AG04449 (cell line): ENCODE measurements at regions of chr21 and their contacts with region 1.

Region 1: DNA sequence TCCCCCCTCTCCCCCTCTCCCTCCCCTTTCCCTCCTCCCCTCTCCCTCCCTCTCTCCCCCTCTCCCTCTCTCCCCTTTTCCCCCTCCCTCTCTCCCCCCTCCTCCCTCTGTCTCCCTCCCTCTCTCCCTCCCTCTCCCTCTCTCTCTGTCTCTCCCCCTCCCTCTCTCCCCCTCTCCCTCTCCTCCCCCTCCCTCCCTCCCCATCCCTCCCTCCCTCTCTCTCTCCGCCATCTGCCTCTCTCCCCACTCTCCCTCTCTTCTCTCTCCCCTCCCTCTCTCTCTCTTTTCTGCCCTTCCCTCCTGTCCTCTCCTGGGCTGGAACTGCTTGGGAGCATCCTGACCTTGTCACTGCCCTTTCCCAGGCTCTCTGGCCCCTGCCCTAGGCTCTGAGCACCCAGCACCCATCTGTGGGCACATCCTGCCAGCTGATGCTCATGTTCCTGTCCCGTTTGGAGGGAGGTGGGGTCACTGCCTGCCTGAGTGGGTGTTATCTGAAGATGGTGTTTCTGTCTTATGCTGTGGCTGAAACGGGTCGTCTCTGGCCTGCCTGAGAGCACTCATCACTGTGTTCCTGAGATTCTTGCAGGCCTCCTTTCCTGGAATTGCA is 10.8 kb downstream of the FTCD start:
- DNase-seq: no peak
- H3K4me3 ChIP-seq: no peak overlapping the region
- CTCF ChIP-seq: no peak

Region 2: GRCh38 chr21:45880097-45881068 is 264.2 kb before region 1 on chr21:
- CTCF ChIA-PET with region 1: no interaction called
- POLR2A ChIA-PET with region 1: no interaction called
- DNase-seq: no peak
- H3K4me3 ChIP-seq: no peak overlapping the region
- CTCF ChIP-seq: peak; percentile 68

Region 3: DNA sequence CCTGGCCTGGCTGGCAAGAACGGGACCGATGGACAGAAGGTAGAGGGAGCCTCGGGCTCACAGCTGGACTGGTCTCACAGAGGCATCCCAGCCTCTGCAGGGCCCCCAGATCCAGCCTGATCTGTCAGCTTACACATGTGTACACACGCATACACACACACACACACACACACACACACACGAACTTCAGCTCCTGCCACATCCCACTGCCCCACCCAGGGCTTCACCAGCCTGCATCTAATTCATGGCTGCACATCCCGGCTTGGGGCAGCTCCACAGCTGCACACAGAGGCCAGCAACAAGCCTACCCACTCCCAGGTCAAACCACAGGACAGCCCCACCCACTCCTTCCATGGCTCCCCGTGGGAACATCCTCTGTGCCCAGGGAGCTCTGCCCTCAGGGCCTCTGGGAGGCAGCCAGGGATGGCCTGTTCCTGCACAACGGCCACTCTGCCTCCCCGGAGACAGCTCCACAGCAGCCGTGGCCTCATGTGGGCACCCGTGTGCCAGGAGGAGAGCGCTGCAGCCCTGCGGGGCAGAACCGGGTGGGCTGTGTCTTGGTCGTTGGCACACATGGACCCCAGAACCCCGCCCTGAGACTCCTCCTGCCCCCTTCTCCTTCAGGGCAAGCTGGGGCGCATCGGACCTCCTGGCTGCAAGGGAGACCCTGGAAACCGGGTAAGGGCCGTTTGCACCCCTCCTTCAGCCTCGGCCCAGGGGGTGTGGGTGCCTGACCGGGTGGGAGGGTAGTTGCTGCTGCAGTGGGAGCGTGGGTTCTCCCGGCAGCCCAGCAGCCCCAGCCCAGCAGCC is 27.6 kb before region 1 on chr21:
- CTCF ChIA-PET with region 1: interaction called, 12 read pairs
- POLR2A ChIA-PET with region 1: no interaction called
- DNase-seq: no peak
- H3K4me3 ChIP-seq: no peak overlapping the region
- CTCF ChIP-seq: no peak

Region 4: DNA sequence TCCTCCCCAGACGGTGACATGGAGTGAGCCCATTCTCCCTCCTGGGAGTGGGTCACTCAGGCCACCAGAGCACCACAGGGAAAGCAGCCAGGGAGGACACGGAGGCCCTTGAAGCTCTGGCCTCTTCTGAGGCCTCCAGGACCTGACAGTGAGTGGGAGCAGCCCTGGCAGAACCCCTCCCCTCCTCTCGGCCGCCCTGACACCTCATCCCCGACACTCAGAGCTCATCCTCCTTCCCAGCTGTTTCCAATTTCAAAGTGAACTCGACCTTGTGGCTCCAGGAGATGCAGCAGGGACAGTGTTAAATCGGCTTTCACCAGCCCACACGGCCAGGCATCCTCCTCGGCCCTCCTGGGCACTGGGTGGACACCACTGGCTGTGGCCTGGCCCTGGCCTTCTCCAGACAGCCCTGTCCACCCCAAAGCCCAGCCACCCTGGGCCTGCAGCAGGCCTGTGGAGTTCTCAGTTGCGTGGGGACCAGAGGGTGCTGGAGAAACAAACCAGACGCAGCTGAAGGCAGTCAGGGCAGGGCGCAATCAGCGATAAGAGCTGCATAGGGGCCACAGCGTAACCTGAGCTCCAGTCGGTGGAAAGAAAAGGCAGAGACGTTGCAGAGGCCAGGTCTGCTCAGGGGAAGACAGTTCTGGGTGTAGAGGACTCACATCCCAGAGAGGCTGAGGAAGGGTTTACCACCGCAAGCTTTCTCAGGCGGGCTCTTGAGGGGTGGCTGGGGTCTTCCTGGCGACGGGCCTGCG is 16.3 kb before region 1 on chr21:
- CTCF ChIA-PET with region 1: interaction called, 14 read pairs
- POLR2A ChIA-PET with region 1: no interaction called
- DNase-seq: no peak
- H3K4me3 ChIP-seq: no peak overlapping the region
- CTCF ChIP-seq: no peak

Region 5: DNA sequence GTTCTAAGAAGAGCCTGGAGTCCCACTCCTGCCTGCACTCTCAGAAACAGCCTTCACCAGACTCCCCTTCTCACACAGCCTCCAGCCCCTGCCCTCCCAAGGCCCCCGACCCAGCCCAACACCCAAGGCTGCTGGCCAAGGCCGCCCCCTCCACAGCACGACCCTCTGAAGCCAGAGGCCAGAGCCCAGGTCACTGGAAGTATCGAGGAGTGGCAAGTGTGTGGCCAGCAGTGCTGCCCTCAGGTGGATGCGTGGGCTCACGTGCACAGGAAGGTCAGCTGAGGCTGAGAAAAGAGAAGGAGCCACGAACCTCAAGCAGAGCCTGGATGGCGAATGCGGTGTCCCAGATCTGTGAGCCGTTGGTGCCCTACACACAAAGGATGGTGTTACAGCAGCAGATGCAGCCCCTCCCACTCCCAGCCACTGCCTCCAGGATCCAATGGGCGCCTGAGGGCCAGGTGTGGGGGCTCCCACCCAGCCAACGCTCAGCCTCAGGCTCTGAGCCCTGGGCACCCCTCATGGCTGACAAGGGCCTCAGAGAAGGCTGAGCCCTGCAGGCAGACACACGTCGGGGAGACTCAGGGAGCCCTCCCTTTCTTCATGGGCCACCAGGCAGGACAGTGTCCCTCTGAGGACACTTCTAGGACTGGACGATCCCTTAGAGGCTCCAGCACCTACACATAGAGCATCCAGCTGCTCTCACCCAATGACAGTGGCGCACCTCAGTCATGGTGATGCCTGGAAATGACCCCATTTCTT is 66.0 kb after region 1 on chr21:
- CTCF ChIA-PET with region 1: no interaction called
- POLR2A ChIA-PET with region 1: no interaction called
- DNase-seq: no peak
- H3K4me3 ChIP-seq: no peak overlapping the region
- CTCF ChIP-seq: no peak

Region 6: GRCh38 chr21:46228345-46229051 is 83.9 kb after region 1 on chr21 and contains the start of gene LSS:
- CTCF ChIA-PET with region 1: interaction called, 28 read pairs
- POLR2A ChIA-PET with region 1: no interaction called
- DNase-seq: peak; percentile 69
- H3K4me3 ChIP-seq: peak within 1 kb of the TSS; percentile 89
- CTCF ChIP-seq: no peak

Region 7: DNA sequence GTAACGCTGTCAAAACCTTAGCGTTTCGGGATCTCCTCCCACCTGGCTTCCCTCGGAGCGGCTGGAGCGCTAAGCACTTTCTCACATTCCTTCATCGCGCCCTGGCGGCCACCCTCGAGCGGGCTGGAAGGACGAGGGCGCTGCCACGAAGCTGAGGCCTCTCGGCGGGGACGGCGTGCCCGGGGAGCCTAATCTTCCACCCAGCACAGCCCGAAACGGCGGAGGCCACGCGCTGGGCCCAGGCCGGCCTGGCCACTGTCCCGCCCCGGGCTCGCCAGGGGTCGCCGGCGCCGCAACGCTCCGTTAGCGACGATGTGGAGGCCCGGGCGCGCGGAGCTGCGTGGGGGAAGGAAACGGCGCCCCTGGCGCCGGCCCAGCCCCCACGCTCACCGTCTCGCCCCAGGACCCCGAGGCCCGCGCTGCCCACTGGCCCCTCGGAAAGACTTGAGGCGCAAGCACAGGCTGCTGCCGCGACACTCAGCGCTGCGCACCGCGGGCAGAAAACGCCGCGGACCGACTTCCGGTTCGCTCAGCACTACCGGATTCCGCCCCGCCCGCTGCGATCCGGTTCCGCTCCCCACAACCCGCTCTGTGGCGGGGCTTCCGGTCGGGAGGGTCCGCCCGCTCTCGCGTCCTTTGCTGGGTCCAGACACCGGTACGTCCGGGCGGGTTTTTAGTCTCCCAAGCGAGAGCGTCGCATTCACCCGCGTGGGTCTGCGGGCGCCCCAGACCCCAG is 141.4 kb after region 1 on chr21 and contains the start of gene YBEY:
- CTCF ChIA-PET with region 1: interaction called, 19 read pairs
- POLR2A ChIA-PET with region 1: no interaction called
- DNase-seq: no peak
- H3K4me3 ChIP-seq: peak within 1 kb of the TSS; percentile 77
- CTCF ChIP-seq: peak; percentile 69